PC-9 (cell line): ENCODE measurements at regions of chr22 and their contacts with region 1.

Region 1: DNA sequence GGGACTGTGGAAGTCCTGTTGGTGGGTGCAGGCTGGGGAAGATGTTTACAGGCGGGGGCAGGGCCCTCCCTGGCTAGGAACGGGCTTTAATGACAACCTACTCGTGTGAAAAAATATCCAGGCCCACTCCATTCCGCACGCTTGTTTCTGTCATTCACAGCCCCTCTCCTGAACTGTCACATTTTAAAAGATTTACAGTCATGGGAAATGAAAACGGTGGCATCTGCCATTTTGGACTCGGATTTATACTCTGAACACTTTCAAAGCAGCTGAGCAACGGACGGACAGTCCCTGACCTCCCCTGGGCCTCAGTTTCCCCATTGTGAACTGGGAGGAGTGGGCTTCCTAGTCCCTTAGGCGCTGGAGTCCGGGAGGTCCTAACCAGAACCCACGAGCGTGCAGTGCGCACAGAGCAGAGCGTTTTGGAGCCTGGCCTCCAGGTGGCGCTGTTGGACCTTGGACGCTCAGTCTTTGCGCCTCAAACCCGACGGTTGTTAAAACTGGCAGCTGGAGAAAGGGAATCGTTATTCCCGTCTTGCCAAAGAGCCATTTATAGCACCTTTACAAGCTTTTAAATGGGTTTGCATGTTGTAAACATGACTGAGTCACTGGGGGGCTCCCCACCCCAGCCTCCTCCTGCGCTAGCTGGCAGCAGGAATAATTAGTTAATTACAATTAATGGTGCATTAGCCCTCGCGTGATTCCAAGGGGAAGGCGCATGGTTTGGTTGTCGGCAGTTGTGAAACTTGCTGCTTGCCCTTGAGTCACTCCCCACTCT is 75.3 kb downstream of the FBLN1 start:
- DNase-seq: peak; percentile 63 to 79
- H3K4me3 ChIP-seq: no peak overlapping the region
- H3K27ac ChIP-seq: no peak overlapping the region
- H3K4me1 ChIP-seq: peaks cover under 1% of the 10 kb centered on the region; the same call in 1 of the 2 replicates
- H3K27me3 ChIP-seq: no peaks in the 10 kb centered on the region
- CTCF ChIP-seq: peak; percentile 99

Region 2: GRCh38 chr22:45831394-45831793 is 253.5 kb after region 1 on chr22:
- CTCF ChIA-PET with region 1: no interaction called
- POLR2A ChIA-PET with region 1: no interaction called
- intact Hi-C with region 1: loop called (anchors 5 kb)
- DNase-seq: no peak
- H3K4me3 ChIP-seq: no peak overlapping the region
- H3K27ac ChIP-seq: peak overlapping the region; percentile 14; the same call in 1 of the 2 replicates
- H3K4me1 ChIP-seq: peaks cover 20% of the 10 kb centered on the region
- H3K27me3 ChIP-seq: no peaks in the 10 kb centered on the region
- CTCF ChIP-seq: peak; percentile 62